PC-9 (cell line): ENCODE measurements at regions of chr1 and their contacts with region 1.

Region 1: DNA sequence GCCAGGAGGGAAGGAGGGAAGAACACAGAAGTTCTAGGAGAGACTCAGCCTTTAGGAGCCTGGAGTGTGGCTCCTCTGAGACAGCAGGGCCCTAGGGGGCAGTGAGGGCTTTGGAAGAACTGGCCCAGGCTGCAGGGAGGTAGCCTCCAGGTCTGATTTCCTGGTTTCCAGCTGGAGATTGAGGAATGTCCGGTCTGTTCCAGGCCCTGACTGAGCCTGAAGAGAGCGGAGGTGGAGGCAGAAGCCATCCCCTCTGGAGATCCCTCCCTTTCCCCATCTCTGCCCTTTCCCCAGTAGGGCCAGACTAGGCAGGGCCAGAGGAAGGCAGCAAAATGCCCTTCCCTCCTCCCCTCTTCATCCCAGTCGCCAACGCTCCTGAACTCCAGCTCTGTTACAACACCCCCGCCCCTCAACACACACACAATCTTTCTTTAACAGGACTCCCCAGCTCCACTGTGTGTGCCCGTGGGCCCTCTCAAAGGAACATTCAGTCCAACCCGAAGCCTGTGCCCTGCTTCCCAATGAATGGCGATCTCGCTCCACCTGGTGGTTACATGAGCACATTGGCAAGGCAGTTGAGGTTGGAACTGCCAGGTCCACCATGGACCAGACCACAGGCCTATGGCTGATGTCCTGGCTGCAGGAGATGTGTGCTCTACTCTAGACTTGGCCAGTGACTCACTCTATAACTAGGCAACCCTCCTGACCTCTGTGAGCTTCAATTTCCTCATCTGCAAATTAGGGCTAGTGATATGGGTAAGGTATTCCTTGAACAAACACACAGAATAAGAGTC is 32.0 kb downstream of the MAP7D1 start:
- DNase-seq: peak; percentile 78 to 88
- H3K4me3 ChIP-seq: no peak overlapping the region
- H3K27ac ChIP-seq: peak overlapping the region; percentile 53
- H3K4me1 ChIP-seq: peaks cover 9% of the 10 kb centered on the region; the same call in 1 of the 2 replicates
- H3K27me3 ChIP-seq: no peaks in the 10 kb centered on the region
- CTCF ChIP-seq: peak; percentile 92

Region 2: GRCh38 chr1:35857830-35858229 is 330.2 kb before region 1 on chr1:
- CTCF ChIA-PET with region 1: no interaction called
- POLR2A ChIA-PET with region 1: no interaction called
- intact Hi-C with region 1: loop called (anchors 10 kb)
- DNase-seq: no peak
- H3K4me3 ChIP-seq: no peak overlapping the region
- H3K27ac ChIP-seq: no peak overlapping the region
- H3K4me1 ChIP-seq: no peaks in the 10 kb centered on the region
- H3K27me3 ChIP-seq: no peaks in the 10 kb centered on the region
- CTCF ChIP-seq: peak; percentile 48; the same call in 1 of the 2 replicates

Region 3: DNA sequence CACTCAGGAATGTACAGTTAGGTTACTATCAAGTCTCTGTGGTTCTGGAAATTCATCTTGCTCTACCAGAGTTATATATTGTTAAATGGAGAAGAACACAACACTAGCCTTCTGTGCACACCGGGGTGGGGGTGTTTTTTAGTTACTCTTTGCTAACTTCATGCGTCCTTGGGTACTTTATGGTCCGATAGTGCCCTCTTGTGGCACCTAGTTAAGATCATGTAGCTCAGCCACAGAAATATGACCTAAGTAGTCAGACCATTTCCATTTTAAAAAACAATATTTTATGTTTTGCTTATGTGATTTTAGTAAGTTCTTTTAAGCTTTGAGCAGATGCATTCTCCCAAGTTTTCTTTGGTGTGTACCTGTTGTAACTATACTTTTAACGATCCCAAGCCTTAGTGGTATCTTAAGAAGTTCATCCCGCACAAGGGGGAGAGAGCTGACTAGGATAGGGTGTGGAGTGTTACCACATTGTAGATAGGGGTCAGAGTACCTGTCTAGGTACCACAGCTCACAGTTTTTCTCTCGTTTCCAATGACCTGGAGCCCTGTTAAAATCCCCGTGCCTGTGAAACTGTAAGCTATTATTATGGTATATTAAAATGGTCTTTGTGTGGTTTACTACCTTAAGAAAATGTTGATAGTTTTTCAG is 97.6 kb after region 1 on chr1:
- CTCF ChIA-PET with region 1: interaction called, 9 read pairs
- POLR2A ChIA-PET with region 1: no interaction called
- intact Hi-C with region 1: loop called (anchors 1 kb)
- DNase-seq: peak; percentile 56 to 73
- H3K4me3 ChIP-seq: no peak overlapping the region
- H3K27ac ChIP-seq: peak overlapping the region; percentile 31; the same call in 1 of the 2 replicates
- H3K4me1 ChIP-seq: no peaks in the 10 kb centered on the region
- H3K27me3 ChIP-seq: no peaks in the 10 kb centered on the region
- CTCF ChIP-seq: peak; percentile 85